ENCODE measurements at regions of chr1 and their contacts with region 1.

Region 1: DNA sequence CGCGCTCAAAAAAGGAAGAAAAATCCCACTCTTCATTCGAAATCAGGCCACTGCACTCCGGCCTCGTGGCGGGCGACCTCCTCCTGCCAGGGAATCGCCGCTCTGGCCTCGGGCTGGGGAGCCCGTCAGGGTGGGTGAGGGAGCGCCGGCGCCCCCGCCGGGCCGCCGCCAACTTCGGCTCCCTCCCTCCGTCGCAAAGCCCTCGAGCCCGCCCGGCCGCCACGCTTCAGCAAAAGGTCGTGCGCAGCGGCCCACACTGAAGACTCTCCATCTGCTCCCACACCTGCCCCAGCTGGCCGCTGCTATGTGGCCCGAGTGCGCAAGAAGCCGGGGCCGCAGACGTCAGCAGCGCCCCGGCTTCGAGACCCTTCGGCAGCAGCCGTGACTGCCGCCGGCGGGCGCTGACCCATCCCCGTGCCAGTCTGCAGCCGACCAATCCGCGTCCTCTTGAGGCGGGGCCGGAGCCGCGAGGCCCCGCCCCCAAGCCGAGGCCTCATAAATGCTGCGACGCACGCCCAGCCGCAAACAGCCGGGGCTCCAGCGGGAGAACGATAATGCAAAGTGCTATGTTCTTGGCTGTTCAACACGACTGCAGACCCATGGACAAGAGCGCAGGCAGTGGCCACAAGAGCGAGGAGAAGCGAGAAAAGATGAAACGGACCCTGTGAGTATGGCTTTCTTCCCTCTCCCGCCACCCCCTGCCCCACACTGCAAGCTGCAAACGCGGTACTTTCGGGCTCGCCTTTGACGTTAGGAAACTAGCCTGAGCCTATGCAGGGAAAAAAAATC is at the start of gene RGS2:
- DNase-seq: peak; percentile 86 to 89 (median 87)
- H3K4me3 ChIP-seq: peak within 1 kb of the TSS; percentile 89 to 97
- H3K4me3 Mint-ChIP-seq: peak within 1 kb of the TSS; percentile 92 to 99 (median 98)
- H3K27ac ChIP-seq: peak within 1 kb of the TSS; percentile 66
- H3K27ac Mint-ChIP-seq: peak within 1 kb of the TSS; percentile 94 to 99 (median 97)
- H3K4me1 ChIP-seq: peaks cover 36% of the 10 kb centered on the region
- H3K4me1 Mint-ChIP-seq: peaks cover 26 to 42% (median 32%) of the 10 kb centered on the region in 4 donors
- H3K27me3 ChIP-seq: no peaks in the 10 kb centered on the region
- H3K27me3 Mint-ChIP-seq: peaks cover 0 to 2% of the 10 kb centered on the region in 2 donors
- total RNA-seq, gene RGS2: 26.4 to 27.9 TPM

Region 2: GRCh38 chr1:192516776-192517297 is 291.9 kb before region 1 on chr1:
- CTCF ChIA-PET with region 1: no interaction called
- POLR2A ChIA-PET with region 1: no interaction called
- intact Hi-C with region 1: loop called (anchors 2 kb)
- DNase-seq: peak; percentile 83 to 90 (median 86)
- H3K4me3 ChIP-seq: no peak overlapping the region
- H3K4me3 Mint-ChIP-seq: peak overlapping the region; percentile 56 to 83 (median 76)
- H3K27ac ChIP-seq: peak overlapping the region; percentile 35
- H3K27ac Mint-ChIP-seq: peak overlapping the region; percentile 81 to 98 (median 94)
- H3K4me1 ChIP-seq: peaks cover 28% of the 10 kb centered on the region
- H3K4me1 Mint-ChIP-seq: peaks cover 28 to 47% (median 38%) of the 10 kb centered on the region in 4 donors
- H3K27me3 ChIP-seq: no peaks in the 10 kb centered on the region
- H3K27me3 Mint-ChIP-seq: no peaks in the 10 kb centered on the region

Region 3: GRCh38 chr1:192609110-192610079 is 199.3 kb before region 1 on chr1:
- CTCF ChIA-PET with region 1: interaction called, 6 read pairs
- POLR2A ChIA-PET with region 1: no interaction called
- intact Hi-C with region 1: loop called (anchors 10 kb)
- DNase-seq: peak; percentile 55 to 79 (median 71)
- H3K4me3 ChIP-seq: no peak overlapping the region
- H3K4me3 Mint-ChIP-seq: peak overlapping the region; percentile 33 to 76 (median 66)
- H3K27ac ChIP-seq: peak overlapping the region; percentile 0
- H3K27ac Mint-ChIP-seq: peak overlapping the region; percentile 6 to 90 (median 85)
- H3K4me1 ChIP-seq: peaks cover 15% of the 10 kb centered on the region
- H3K4me1 Mint-ChIP-seq: peaks cover 12 to 18% (median 15%) of the 10 kb centered on the region in 4 donors
- H3K27me3 ChIP-seq: no peaks in the 10 kb centered on the region
- H3K27me3 Mint-ChIP-seq: no peaks in the 10 kb centered on the region

Region 4: DNA sequence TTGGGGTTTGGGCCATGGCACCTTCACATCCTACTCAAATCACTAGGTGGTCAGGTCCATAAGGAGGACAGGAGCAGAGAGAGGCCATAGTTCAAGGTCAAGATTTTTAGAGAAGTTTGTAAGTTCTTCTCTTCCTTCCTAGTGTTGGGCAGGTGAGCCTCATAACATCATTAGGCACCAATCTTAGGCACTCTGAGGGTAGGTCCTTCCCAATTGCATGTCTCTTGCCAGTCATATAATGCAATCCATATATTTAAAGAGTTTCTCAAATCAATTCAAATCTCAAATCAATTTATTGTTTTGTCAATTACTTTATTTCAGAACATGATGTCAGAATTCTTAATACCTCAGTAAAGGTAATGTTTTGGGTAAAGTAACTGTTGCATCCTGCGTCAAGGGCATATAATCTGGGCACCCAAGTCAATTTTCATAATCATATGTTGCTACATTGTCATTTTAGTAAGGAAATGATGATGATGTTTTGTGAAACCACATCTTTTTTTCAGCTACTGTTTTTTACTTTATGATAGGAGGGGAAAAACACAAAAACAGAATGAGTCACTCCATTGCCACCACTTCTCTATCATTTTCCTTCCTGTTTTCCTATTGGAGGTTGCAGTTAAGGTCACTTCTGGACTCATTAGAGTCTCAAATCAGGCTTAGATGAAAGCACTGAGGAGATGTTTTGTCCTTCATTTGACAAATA is 127.8 kb after region 1 on chr1:
- CTCF ChIA-PET with region 1: no interaction called
- POLR2A ChIA-PET with region 1: interaction called, 10 read pairs
- intact Hi-C with region 1: loop called (anchors 5 kb)
- DNase-seq: peak in 2 of 5 donors; percentile 0 to 6
- H3K4me3 ChIP-seq: no peak overlapping the region
- H3K4me3 Mint-ChIP-seq: no peak overlapping the region
- H3K27ac ChIP-seq: no peak overlapping the region
- H3K27ac Mint-ChIP-seq: peak overlapping the region in 4 of 7 donors; percentile 20 to 53 (median 46)
- H3K4me1 ChIP-seq: no peaks in the 10 kb centered on the region
- H3K4me1 Mint-ChIP-seq: peaks cover 3 to 12% (median 7%) of the 10 kb centered on the region in 4 donors
- H3K27me3 ChIP-seq: no peaks in the 10 kb centered on the region
- H3K27me3 Mint-ChIP-seq: no peaks in the 10 kb centered on the region

Region 5: DNA sequence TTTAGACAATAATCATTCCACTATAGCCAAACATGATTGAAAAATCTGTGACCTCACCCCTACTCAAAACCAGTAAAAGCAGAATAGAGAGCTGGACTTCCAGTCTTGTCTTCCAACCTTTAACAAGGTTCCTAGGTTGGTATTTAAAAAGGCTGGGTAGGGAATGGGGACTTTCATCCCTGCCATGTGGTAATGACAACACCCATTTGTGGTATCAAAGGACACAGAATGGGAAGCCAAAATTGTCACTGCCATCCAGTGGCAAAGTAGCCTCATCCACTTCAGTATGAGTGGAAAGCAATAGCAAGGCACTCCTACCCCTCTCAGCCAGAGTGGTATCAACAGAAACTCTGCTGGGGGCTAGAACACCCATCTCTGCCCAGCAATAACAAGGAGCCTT is 216.5 kb after region 1 on chr1:
- CTCF ChIA-PET with region 1: interaction called, 219 read pairs
- POLR2A ChIA-PET with region 1: interaction called, 33 read pairs
- intact Hi-C with region 1: no loop called
- DNase-seq: no peak
- H3K4me3 ChIP-seq: no peak overlapping the region
- H3K4me3 Mint-ChIP-seq: no peak overlapping the region
- H3K27ac ChIP-seq: no peak overlapping the region
- H3K27ac Mint-ChIP-seq: no peak overlapping the region
- H3K4me1 ChIP-seq: no peaks in the 10 kb centered on the region
- H3K4me1 Mint-ChIP-seq: peaks cover 0 to 3% (median under 1%) of the 10 kb centered on the region in 4 donors
- H3K27me3 ChIP-seq: no peaks in the 10 kb centered on the region
- H3K27me3 Mint-ChIP-seq: no peaks in the 10 kb centered on the region

Region 6: GRCh38 chr1:193104906-193105820 is 296.5 kb after region 1 on chr1 and contains the start of gene GLRX2:
- CTCF ChIA-PET with region 1: no interaction called
- POLR2A ChIA-PET with region 1: interaction called, 7 read pairs
- intact Hi-C with region 1: loop called (anchors 5 kb)
- DNase-seq: peak; percentile 43 to 71 (median 58)
- H3K4me3 ChIP-seq: peak within 1 kb of the TSS; percentile 65 to 94
- H3K4me3 Mint-ChIP-seq: peak within 1 kb of the TSS; percentile 94 to 98 (median 95)
- H3K27ac ChIP-seq: peak within 1 kb of the TSS; percentile 59
- H3K27ac Mint-ChIP-seq: peak within 1 kb of the TSS; percentile 61 to 95 (median 91)
- H3K4me1 ChIP-seq: peaks cover 18% of the 10 kb centered on the region
- H3K4me1 Mint-ChIP-seq: peaks cover 19 to 30% (median 24%) of the 10 kb centered on the region in 4 donors
- H3K27me3 ChIP-seq: no peaks in the 10 kb centered on the region
- H3K27me3 Mint-ChIP-seq: no peaks in the 10 kb centered on the region
- total RNA-seq, gene GLRX2: 15.0 to 17.0 TPM

Region 7: GRCh38 chr1:194295685-194296084 is 1487.0 kb after region 1 on chr1:
- CTCF ChIA-PET with region 1: no interaction called
- POLR2A ChIA-PET with region 1: interaction called, 4 read pairs
- intact Hi-C with region 1: loop called (anchors 1 kb)
- DNase-seq: peak; percentile 48 to 72 (median 68)
- H3K4me3 ChIP-seq: no peak overlapping the region
- H3K4me3 Mint-ChIP-seq: no peak overlapping the region
- H3K27ac ChIP-seq: no peak overlapping the region
- H3K27ac Mint-ChIP-seq: peak overlapping the region; percentile 4 to 69 (median 40)
- H3K4me1 ChIP-seq: peaks cover 12% of the 10 kb centered on the region
- H3K4me1 Mint-ChIP-seq: peaks cover 13 to 16% (median 14%) of the 10 kb centered on the region in 4 donors
- H3K27me3 ChIP-seq: no peaks in the 10 kb centered on the region
- H3K27me3 Mint-ChIP-seq: no peaks in the 10 kb centered on the region

Measured in CD4-positive, alpha-beta memory T cell (primary cell).